ENCODE measurements at regions of chr9 and their contacts with region 1.

Region 1: GRCh38 chr9:77751341-77752091 is 103.4 kb upstream of the GNA14 start:
- DNase-seq: peak; percentile 8 to 40 (median 8)
- ATAC-seq: peak; percentile 84
- H3K4me3 ChIP-seq: no peak overlapping the region
- H3K27ac ChIP-seq: no peak overlapping the region
- H3K4me1 ChIP-seq: peaks cover 4 to 5% of the 10 kb centered on the region in 2 experiments; a peak in 2 of 5 replicates
- H3K27me3 ChIP-seq: no peaks in the 10 kb centered on the region
- CTCF ChIP-seq: peak; percentile 10 to 49 (median 29); a peak in 3 of 6 replicates
- EP300 ChIP-seq: no peak
- POLR2A ChIP-seq: no peak
- RAD21 ChIP-seq: peak in 1 of 2 experiments; percentile 48; a peak in 2 of 4 replicates

Region 2: GRCh38 chr9:77433675-77434445 is 317.7 kb before region 1 on chr9:
- CTCF ChIA-PET with region 1: no interaction called
- POLR2A ChIA-PET with region 1: no interaction called
- in situ Hi-C with region 1: no loop called
- intact Hi-C with region 1: loop called (anchors 5 kb)
- DNase-seq: peak; percentile 49 to 65 (median 60)
- ATAC-seq: peak; percentile 97
- H3K4me3 ChIP-seq: no peak overlapping the region
- H3K27ac ChIP-seq: no peak overlapping the region
- H3K4me1 ChIP-seq: no peaks in the 10 kb centered on the region; a peak in 1 of 5 replicates
- H3K27me3 ChIP-seq: peaks cover 5 to 35% of the 10 kb centered on the region in 2 experiments; a peak in 4 of 5 replicates
- CTCF ChIP-seq: peak; percentile 82 to 89 (median 87)
- EP300 ChIP-seq: no peak
- POLR2A ChIP-seq: no peak
- RAD21 ChIP-seq: peak; percentile 80 to 83

Region 3: DNA sequence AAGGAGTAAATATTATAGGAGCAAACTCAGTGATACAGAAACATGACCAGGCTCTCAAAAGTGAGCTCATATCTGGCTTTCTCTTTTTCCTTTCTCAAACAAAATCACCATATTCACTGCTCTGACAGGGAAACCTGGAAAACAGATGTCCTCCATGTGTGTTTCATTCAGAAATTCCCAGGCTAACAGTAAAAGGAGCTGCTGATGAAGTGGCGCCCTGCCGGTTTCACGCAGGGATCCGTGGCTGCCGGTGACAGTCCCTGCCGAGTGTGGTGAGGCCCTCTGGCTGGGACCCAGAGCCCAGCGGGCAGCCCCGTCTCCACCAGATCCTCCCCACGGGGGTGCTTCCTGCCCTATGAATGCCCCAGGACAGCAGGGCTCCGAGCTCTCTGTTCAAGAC is 311.5 kb before region 1 on chr9:
- CTCF ChIA-PET with region 1: no interaction called
- POLR2A ChIA-PET with region 1: no interaction called
- in situ Hi-C with region 1: loop called (anchors 10 kb)
- intact Hi-C with region 1: no loop called
- DNase-seq: no peak
- ATAC-seq: no peak
- H3K4me3 ChIP-seq: no peak overlapping the region
- H3K27ac ChIP-seq: no peak overlapping the region
- H3K4me1 ChIP-seq: no peaks in the 10 kb centered on the region
- H3K27me3 ChIP-seq: peaks cover 3 to 31% of the 10 kb centered on the region in 2 experiments; a peak in 4 of 5 replicates
- CTCF ChIP-seq: no peak
- EP300 ChIP-seq: no peak
- POLR2A ChIP-seq: no peak
- RAD21 ChIP-seq: no peak

Region 4: DNA sequence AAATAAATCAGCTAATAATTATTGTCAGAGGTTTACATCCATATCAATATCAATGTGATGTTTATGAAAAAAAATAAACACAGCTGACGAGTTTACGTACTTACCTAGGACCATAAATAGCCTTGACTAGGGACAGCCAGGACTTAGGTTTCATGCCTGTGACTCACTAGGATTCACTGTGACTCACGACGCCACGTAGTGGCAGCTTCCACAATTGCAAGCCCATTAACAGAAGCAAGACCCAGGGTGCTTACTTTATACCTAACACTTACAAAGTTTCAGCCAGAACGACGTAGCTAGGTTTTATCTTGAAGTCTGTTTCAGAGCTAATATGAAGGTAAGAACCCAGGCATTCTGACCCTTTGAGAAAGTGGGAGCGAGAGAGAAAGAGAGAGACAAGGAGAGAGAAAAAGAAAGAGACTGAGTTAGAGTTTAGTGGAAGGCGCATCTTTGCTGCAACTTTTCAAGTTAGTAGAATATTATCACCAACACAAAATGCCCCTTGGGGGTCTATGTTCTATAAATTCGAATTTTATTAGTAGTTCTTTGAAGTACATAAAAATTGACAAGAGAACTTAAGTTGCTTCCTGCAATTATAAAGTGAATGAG is 294.6 kb before region 1 on chr9:
- CTCF ChIA-PET with region 1: no interaction called
- POLR2A ChIA-PET with region 1: no interaction called
- in situ Hi-C with region 1: no loop called
- intact Hi-C with region 1: loop called (anchors 2 kb)
- DNase-seq: peak; percentile 72 to 84 (median 76)
- ATAC-seq: peak; percentile 92
- H3K4me3 ChIP-seq: no peak overlapping the region
- H3K27ac ChIP-seq: no peak overlapping the region
- H3K4me1 ChIP-seq: no peaks in the 10 kb centered on the region; a peak in 1 of 5 replicates
- H3K27me3 ChIP-seq: peaks cover 0 to 17% of the 10 kb centered on the region in 2 experiments; a peak in 1 of 5 replicates
- CTCF ChIP-seq: peak; percentile 69 to 75 (median 73)
- EP300 ChIP-seq: no peak
- POLR2A ChIP-seq: no peak
- RAD21 ChIP-seq: peak; percentile 21 to 47; a peak in 2 of 4 replicates

Region 5: DNA sequence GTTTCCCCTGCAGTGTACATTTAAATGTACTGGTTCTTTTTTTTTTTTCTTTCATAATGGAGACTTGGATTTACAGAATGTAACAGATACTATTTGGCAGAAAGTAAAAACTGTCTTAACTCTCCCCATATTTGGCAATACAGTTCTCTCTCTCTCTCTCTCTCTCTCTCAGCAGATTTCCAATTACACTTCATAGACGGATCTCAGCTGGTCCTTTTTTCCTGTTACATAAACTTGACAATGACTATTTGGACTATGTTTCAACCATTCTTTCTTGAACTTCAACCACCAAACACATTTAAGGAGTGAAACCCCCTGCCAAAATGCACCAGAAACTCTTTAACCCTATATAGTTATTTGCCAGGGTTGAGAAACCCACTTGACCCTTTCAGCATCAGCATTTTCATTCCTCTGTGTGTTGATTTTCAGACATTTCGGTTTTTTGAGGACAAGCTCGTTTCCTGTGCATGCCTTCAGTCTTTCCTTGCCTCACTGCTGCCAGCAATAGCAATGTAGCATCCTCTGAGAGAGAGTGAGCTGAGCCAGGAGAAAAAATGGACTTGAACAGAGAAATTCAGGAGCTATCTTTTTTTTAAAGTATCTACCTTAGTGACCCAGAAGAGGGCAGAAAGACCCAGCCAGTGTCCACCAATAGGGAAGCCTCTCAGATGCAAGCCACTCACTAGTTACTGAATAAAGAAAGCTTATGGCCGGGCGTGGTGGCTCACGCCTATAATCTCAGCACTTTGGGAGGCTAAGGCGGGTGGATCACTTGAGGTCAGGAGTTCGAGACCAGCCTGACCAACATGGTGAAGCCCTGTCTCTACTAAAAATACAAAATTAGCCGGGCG is 77.3 kb before region 1 on chr9:
- CTCF ChIA-PET with region 1: no interaction called
- POLR2A ChIA-PET with region 1: interaction called, 3 read pairs
- in situ Hi-C with region 1: no loop called
- intact Hi-C with region 1: loop called (anchors 5 kb)
- DNase-seq: no peak
- ATAC-seq: peak; percentile 57; the same call in 2 of the 3 replicates
- H3K4me3 ChIP-seq: no peak overlapping the region
- H3K27ac ChIP-seq: no peak overlapping the region
- H3K4me1 ChIP-seq: no peaks in the 10 kb centered on the region
- H3K27me3 ChIP-seq: no peaks in the 10 kb centered on the region; a peak in 2 of 5 replicates
- CTCF ChIP-seq: peak in 1 of 3 experiments; percentile 37; a peak in 2 of 6 replicates
- EP300 ChIP-seq: no peak
- POLR2A ChIP-seq: no peak
- RAD21 ChIP-seq: peak in 1 of 2 experiments; percentile 27; a peak in 2 of 4 replicates

Measured in K562 (cell line).